ENCODE measurements at regions of chr7 and their contacts with region 1.

Region 1: GRCh38 chr7:23863209-23863798 is 153.3 kb downstream of the STK31 start:
- DNase-seq: peak; percentile 38
- ATAC-seq: peak; percentile 47
- H3K4me3 Mint-ChIP-seq: no peak overlapping the region
- H3K27ac Mint-ChIP-seq: no peak overlapping the region
- H3K4me1 Mint-ChIP-seq: peaks cover 5% of the 10 kb centered on the region
- H3K27me3 Mint-ChIP-seq: peaks cover 9% of the 10 kb centered on the region

Region 2: GRCh38 chr7:24283897-24284698 is 420.8 kb after region 1 on chr7 and contains the start of gene NPY:
- CTCF ChIA-PET with region 1: no interaction called
- POLR2A ChIA-PET with region 1: no interaction called
- intact Hi-C with region 1: loop called in 1 of 2 experiments (anchors 10 kb)
- DNase-seq: peak; percentile 43
- ATAC-seq: peak; percentile 25
- H3K4me3 Mint-ChIP-seq: peak within 1 kb of the TSS; percentile 55
- H3K27ac Mint-ChIP-seq: no peak within 1 kb of the TSS
- H3K4me1 Mint-ChIP-seq: peaks cover 16% of the 10 kb centered on the region
- H3K27me3 Mint-ChIP-seq: peaks cover 44% of the 10 kb centered on the region
- total RNA-seq, gene NPY: not detected

Region 3: GRCh38 chr7:24381894-24382505 is 518.7 kb after region 1 on chr7:
- CTCF ChIA-PET with region 1: no interaction called
- POLR2A ChIA-PET with region 1: no interaction called
- intact Hi-C with region 1: loop called (anchors 5 to 10 kb)
- DNase-seq: no peak
- ATAC-seq: peak; percentile 39
- H3K4me3 Mint-ChIP-seq: no peak overlapping the region
- H3K27ac Mint-ChIP-seq: no peak overlapping the region
- H3K4me1 Mint-ChIP-seq: no peaks in the 10 kb centered on the region
- H3K27me3 Mint-ChIP-seq: peaks cover 4% of the 10 kb centered on the region

Measured in activated CD4-positive, alpha-beta T cell treated with anti-CD3 and anti-CD28 coated beads for 36 hours (primary cell).